Activated T-helper 1 cell treated with anti-CD3 and anti-CD28 coated beads, Interleukin-12 subunit alpha, Interleukin-12 subunit beta, Interleukin-2, Interleukin-4 antibody, amounts not matched to agents 30 ng/mL and 10 ng/mL and 1 ng/mL, durations not matched to agents 14 hours and 24 hours and 36 hours (primary cell): ENCODE measurements at regions of chr18 and their contacts with region 1.

Region 1: GRCh38 chr18:158128-159036 is at the start of gene USP14:
- DNase-seq: peak; percentile 94
- H3K4me3 Mint-ChIP-seq: peak within 1 kb of the TSS; percentile 98
- H3K27ac Mint-ChIP-seq: peak within 1 kb of the TSS; percentile 95
- H3K4me1 Mint-ChIP-seq: peaks cover 29% of the 10 kb centered on the region
- H3K27me3 Mint-ChIP-seq: peaks cover 5% of the 10 kb centered on the region
- total RNA-seq, gene USP14: 95.3 and 99.6 TPM in 2 replicates

Region 2: DNA sequence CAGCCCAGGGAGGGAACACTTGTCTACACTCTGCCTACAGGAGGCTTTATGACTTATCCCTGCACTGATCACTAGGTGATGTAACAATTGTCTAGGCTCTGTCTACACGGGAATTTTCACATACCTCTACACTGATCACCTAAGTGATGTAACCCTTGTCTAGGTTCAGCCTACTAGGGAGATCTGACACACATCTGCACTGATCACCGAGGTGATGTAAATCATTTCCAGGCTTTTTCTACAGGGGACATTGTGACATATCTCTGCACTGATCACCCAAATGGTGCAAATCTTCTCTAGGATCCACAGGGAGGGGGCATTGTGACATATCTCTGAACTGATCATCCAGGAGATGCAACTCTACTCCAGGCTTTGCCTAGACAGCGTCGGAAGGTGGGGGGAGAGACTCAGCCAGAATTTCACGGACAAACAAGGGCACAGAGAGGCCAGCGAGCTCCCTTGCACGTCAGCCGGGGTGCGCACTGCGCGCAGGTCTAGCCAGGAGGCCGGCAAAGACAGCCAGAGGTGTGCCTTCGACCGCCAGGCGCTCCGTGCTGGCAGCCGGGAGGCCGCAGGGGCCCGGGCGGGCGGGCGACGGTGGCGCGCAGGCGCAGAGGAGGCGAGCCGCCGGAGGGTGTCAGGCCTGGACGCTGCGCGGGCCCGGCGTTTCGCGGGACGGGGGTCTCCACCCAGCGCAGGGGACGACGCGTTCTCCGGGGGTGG is 46.9 kb before region 1 on chr18:
- intact Hi-C with region 1: loop called (anchors 2 kb)
- DNase-seq: peak; percentile 67
- H3K4me3 Mint-ChIP-seq: peak overlapping the region; percentile 81
- H3K27ac Mint-ChIP-seq: peak overlapping the region; percentile 89
- H3K4me1 Mint-ChIP-seq: peaks cover 13% of the 10 kb centered on the region
- H3K27me3 Mint-ChIP-seq: peaks cover 4% of the 10 kb centered on the region

Region 3: DNA sequence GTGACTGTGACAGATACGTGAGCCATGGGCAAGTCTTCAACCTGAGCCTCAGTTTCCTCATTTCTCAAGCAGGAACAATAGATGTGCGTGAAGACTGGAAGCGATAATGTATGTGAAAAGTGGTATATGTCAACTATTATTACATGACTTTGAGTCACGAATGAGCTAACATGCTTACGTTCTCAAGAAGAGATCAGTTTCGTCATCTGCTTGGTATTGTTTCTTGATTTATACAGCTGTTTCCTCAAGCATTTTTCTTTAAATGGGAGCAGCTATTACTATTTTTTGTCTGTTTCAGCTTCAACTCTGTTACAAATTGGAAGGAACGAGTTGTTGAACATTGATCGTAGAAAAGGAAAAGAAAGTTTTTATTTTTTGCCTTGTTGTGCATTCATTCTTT is 158.0 kb after region 1 on chr18:
- intact Hi-C with region 1: no loop called
- DNase-seq: no peak
- H3K4me3 Mint-ChIP-seq: no peak overlapping the region
- H3K27ac Mint-ChIP-seq: no peak overlapping the region
- H3K4me1 Mint-ChIP-seq: no peaks in the 10 kb centered on the region
- H3K27me3 Mint-ChIP-seq: no peaks in the 10 kb centered on the region

Region 4: GRCh38 chr18:596288-596881 is 438.0 kb after region 1 on chr18:
- intact Hi-C with region 1: loop called (anchors 5 kb)
- DNase-seq: no peak
- H3K4me3 Mint-ChIP-seq: no peak overlapping the region
- H3K27ac Mint-ChIP-seq: no peak overlapping the region
- H3K4me1 Mint-ChIP-seq: peaks cover 14% of the 10 kb centered on the region
- H3K27me3 Mint-ChIP-seq: peaks cover 20% of the 10 kb centered on the region

Region 5: GRCh38 chr18:658001-658946 is 499.9 kb after region 1 on chr18:
- intact Hi-C with region 1: loop called (anchors 1 kb)
- DNase-seq: peak; percentile 74
- H3K4me3 Mint-ChIP-seq: peak overlapping the region; percentile 96
- H3K27ac Mint-ChIP-seq: peak overlapping the region; percentile 93
- H3K4me1 Mint-ChIP-seq: peaks cover 39% of the 10 kb centered on the region
- H3K27me3 Mint-ChIP-seq: no peaks in the 10 kb centered on the region